Naive thymus-derived CD4-positive, alpha-beta T cell (primary cell): ENCODE measurements at regions of chr22 and their contacts with region 1.

Region 1: DNA sequence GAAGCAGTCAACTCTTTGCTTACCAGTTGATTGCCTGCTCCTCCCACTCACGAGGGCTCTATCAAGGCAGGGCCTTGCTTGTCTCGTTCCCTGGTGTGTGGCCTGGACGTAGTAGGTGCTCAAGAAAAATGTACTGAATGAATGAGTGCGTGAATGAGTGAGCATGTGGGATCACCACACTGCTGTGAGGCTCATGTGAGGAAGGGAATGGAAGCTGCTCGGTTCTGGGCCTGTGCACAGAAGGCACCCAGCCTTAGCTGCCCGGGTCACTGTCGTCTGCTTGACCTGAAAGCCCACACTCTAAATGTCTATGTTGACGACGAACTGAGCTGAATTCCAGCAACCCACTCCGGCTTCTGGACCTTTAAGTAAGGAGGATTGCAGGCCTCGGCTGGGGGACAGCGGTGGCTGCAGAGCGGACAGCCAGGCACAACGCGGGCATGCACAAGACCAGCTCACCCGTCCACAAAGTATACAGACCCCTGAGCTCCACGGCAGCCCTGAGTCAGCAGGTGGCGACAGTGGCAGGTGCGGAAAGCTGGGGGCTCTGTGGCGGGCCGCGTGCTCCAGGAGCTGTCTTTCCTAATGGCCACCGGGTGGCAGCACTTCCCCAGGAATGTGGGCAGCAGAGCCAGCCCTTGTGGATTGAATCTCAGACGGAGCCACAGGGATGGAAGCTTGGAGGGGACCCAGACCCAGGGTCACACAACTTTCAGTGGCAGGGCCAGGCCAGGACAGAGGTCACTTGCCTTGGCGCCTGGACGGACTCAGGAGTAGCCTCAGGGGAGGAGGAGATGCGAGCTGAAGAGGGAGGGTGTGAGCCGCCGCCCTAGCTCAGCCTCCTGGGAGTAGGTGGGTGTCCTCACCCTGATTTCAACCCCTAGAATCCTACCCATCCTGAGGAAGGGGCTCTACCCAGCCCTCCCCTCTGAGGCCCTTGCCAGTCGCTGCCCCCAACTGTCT is 5.0 kb upstream of the PICK1 start:
- DNase-seq: peak; percentile 59 to 75 (median 69)
- ATAC-seq: peak; percentile 88
- H3K4me3 ChIP-seq: no peak overlapping the region
- H3K4me3 Mint-ChIP-seq: peak overlapping the region in 2 of 10 donors; percentile 13 to 51
- H3K27ac ChIP-seq: no peak overlapping the region
- H3K27ac Mint-ChIP-seq: peak overlapping the region in 2 of 9 donors; percentile 38 to 71
- H3K4me1 ChIP-seq: peaks cover 10 to 11% of the 10 kb centered on the region in 2 donors
- H3K4me1 Mint-ChIP-seq: peaks cover 0 to 14% (median 9%) of the 10 kb centered on the region in 7 donors
- H3K27me3 ChIP-seq: no peaks in the 10 kb centered on the region
- H3K27me3 Mint-ChIP-seq: peaks cover 0 to 28% (median 8%) of the 10 kb centered on the region in 5 donors

Region 2: GRCh38 chr22:38026130-38027111 is 25.8 kb before region 1 on chr22:
- CTCF ChIA-PET with region 1: no interaction called
- POLR2A ChIA-PET with region 1: no interaction called
- intact Hi-C with region 1: no loop called
- DNase-seq: no peak
- ATAC-seq: no peak
- H3K4me3 ChIP-seq: no peak overlapping the region
- H3K4me3 Mint-ChIP-seq: no peak overlapping the region
- H3K27ac ChIP-seq: no peak overlapping the region
- H3K27ac Mint-ChIP-seq: no peak overlapping the region
- H3K4me1 ChIP-seq: no peaks in the 10 kb centered on the region
- H3K4me1 Mint-ChIP-seq: no peaks in the 10 kb centered on the region
- H3K27me3 ChIP-seq: no peaks in the 10 kb centered on the region
- H3K27me3 Mint-ChIP-seq: no peaks in the 10 kb centered on the region

Region 3: GRCh38 chr22:38104084-38104483 is 51.9 kb after region 1 on chr22:
- CTCF ChIA-PET with region 1: interaction called, 3 read pairs
- POLR2A ChIA-PET with region 1: no interaction called
- intact Hi-C with region 1: loop called (anchors 1 to 5 kb)
- DNase-seq: no peak
- ATAC-seq: no peak
- H3K4me3 ChIP-seq: no peak overlapping the region
- H3K4me3 Mint-ChIP-seq: no peak overlapping the region
- H3K27ac ChIP-seq: no peak overlapping the region
- H3K27ac Mint-ChIP-seq: no peak overlapping the region
- H3K4me1 ChIP-seq: no peaks in the 10 kb centered on the region
- H3K4me1 Mint-ChIP-seq: peaks cover 0 to 19% (median 9%) of the 10 kb centered on the region in 7 donors
- H3K27me3 ChIP-seq: no peaks in the 10 kb centered on the region
- H3K27me3 Mint-ChIP-seq: no peaks in the 10 kb centered on the region

Region 4: DNA sequence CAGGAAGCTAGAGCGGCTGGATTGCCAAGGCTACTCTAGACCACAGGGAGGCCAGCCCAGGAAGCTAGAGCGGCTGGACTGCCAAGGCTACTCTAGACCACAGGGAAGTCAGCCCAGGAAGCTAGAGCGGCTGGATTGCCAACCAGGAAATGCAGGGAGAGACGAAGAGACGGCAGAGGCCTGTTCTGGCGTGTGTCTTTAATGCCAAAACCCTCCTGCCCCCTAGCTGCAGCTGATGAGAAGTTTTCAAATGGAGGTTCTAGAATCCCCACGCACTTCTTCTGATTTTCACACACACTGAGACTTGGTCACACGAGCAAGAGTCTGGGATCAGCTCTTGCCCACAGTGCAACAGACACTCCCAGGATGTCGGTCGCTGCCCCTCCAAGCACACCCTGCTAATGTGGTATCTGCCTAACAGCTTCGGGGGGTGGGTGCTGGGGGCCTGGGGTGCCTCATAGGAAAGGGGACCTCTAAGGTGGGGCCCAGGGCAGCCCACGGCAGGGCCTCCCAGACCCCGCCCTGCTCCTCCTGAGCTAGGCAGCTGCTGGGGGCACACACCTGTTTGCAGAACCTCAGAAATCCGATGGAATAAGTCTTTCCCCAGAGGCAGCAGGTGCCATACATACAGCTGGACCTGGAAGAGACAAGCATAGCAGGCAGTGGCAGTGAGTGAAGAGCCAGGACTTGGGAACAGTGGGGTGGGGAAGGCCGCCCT is 178.1 kb after region 1 on chr22:
- CTCF ChIA-PET with region 1: interaction called, 16 read pairs
- POLR2A ChIA-PET with region 1: no interaction called
- intact Hi-C with region 1: no loop called
- DNase-seq: peak in 7 of 9 donors; percentile 14 to 48 (median 38)
- ATAC-seq: peak; percentile 78
- H3K4me3 ChIP-seq: no peak overlapping the region
- H3K4me3 Mint-ChIP-seq: no peak overlapping the region
- H3K27ac ChIP-seq: no peak overlapping the region
- H3K27ac Mint-ChIP-seq: peak overlapping the region in 1 of 9 donors; percentile 9
- H3K4me1 ChIP-seq: no peaks in the 10 kb centered on the region
- H3K4me1 Mint-ChIP-seq: peaks cover 0 to 11% (median 0%) of the 10 kb centered on the region in 7 donors
- H3K27me3 ChIP-seq: no peaks in the 10 kb centered on the region
- H3K27me3 Mint-ChIP-seq: no peaks in the 10 kb centered on the region

Region 5: DNA sequence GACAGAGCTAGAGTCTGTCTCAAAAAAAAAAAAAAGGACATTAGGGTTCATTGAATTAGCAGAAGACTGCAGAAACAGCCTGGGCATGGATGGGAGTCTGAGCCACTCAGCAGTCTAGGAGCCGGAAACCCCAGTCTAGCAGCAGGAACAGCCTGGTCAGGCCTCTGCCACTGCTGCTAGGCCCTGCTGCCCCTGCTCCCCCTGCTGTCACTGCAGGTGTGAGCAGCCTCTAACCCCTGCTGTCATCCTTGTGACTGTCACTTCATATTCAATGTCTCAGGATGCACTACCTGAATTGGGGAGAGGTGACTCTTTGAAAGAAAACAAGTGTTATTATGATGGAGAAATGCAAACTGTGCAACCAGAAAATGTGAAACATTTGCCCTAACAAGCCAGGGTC is 460.9 kb after region 1 on chr22:
- CTCF ChIA-PET with region 1: interaction called, 3 read pairs
- POLR2A ChIA-PET with region 1: no interaction called
- intact Hi-C with region 1: loop called in 1 of 2 experiments (anchors 1 kb)
- DNase-seq: peak in 8 of 9 donors; percentile 23 to 58 (median 48)
- ATAC-seq: peak; percentile 87
- H3K4me3 ChIP-seq: no peak overlapping the region
- H3K4me3 Mint-ChIP-seq: no peak overlapping the region
- H3K27ac ChIP-seq: no peak overlapping the region
- H3K27ac Mint-ChIP-seq: peak overlapping the region in 1 of 9 donors; percentile 5
- H3K4me1 ChIP-seq: peaks cover 0 to 4% of the 10 kb centered on the region in 2 donors
- H3K4me1 Mint-ChIP-seq: peaks cover 4 to 14% (median 9%) of the 10 kb centered on the region in 7 donors
- H3K27me3 ChIP-seq: no peaks in the 10 kb centered on the region
- H3K27me3 Mint-ChIP-seq: no peaks in the 10 kb centered on the region